ENCODE measurements at regions of chr11 and their contacts with region 1.

Region 1: GRCh38 chr11:113818426-113818825 is 38.8 kb downstream of the CLDN25 start:
- DNase-seq: no peak

Region 2: GRCh38 chr11:113773416-113774173 is 44.8 kb before region 1 on chr11 and contains the start of gene ZW10:
- intact Hi-C with region 1: no loop called
- DNase-seq: peak; percentile 99
- total RNA-seq, gene ZW10: 9.6 to 10.5 TPM

Region 3: DNA sequence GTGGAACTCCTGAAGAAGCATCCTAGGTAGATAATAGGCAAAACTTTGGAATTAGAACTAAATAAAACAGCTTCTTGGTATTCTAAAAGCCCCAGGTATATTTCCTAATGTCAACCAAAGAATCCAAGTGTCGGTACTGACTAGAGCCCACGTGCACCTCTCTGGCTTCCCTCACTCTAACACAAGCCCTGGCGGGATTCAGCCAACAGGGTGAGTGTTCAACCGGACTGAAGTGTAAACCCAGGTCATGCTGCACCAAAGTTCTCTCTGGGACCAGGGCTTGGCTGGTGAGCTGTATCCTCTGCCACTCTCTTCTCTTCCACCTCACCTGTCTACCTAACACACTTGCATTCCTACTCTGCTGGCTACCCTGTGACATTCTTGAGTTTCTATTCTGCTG is 16.9 kb after region 1 on chr11:
- intact Hi-C with region 1: loop called in 1 of 2 experiments (anchors 1 kb)
- DNase-seq: no peak

Region 4: DNA sequence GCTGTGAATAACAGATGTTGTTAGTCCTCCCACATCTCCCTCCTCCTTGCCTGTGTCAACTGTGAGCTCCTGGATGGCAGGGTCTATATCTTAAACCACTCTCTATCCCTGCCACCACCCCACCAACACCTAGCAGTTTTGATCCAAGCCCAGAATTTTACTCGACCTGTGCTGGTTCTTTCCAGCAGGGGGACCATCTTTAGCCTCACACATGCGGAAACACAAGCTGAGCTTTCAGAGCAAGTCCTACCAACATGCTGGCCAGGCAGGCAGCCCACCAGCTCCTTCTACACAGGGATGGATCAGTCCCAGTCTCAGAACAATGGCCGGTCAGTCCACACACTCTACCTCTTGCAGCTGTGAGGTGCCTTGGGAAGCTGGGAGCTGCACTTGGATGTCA is 1091.4 kb after region 1 on chr11:
- intact Hi-C with region 1: no loop called
- DNase-seq: no peak

Measured in posterior vena cava (tissue), 2 donors.